ENCODE measurements at regions of chr13 and their contacts with region 1.

Region 1: DNA sequence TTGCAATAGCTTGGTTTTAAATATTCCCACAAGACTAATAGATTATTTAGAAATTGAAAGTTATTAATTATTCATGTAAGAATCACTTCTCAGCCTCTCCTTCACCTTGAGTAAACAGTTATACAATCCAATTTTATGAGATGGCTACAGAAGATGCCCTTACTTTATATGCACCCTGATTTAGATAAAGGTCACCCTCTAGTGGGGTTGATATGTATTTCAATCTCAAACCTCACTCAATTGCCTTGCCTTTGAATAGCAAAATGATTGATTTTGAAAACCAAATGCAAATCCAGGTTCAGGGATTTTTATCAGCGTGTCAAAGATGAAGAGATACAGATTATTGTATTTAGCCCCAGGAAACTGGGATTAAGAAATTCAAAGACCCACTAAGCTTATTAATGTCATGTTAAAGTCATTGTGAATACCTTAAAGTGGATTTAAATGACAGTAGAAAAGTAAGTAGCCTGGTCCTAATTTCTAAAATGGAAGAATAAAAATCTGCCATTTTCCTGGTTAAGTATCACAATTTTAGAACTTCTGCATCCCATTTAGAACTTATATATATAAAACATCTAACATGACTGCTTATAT is 305.1 kb downstream of the ITGBL1 start:
- DNase-seq: no peak
- ATAC-seq: no peak
- H3K4me3 ChIP-seq: no peak overlapping the region
- H3K27ac ChIP-seq: no peak overlapping the region
- H3K4me1 ChIP-seq: no peaks in the 10 kb centered on the region
- H3K27me3 ChIP-seq: no peaks in the 10 kb centered on the region
- CTCF ChIP-seq: peak; percentile 24

Region 2: DNA sequence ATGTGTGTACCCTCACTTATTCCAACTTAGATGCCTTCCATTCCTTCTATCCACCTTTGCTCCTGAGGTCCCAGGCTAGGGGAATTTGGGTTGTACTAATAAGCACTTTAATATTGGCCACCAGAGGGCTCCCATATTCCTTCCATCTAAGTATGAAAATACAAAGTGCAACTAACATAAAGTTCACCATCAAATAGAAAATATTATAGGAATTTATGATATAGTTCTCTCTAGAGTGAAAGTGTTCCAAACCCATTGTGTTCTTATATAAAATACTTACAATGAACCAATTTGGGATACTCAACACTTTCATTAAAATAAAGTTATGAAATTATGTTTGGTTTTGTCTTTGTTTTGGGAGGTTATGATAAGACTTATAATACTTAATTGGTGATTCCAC is 242.8 kb before region 1 on chr13:
- intact Hi-C with region 1: loop called in 1 of 2 experiments (anchors 10 kb)
- DNase-seq: no peak
- ATAC-seq: no peak
- H3K4me3 ChIP-seq: no peak overlapping the region
- H3K27ac ChIP-seq: no peak overlapping the region
- H3K4me1 ChIP-seq: no peaks in the 10 kb centered on the region
- H3K27me3 ChIP-seq: no peaks in the 10 kb centered on the region
- CTCF ChIP-seq: peak; percentile 51

Measured in psoas muscle (tissue), 8 donors.